PC-3 (cell line): ENCODE measurements at regions of chr1 and their contacts with region 1.

Region 1: GRCh38 chr1:31335007-31335406 is 37.9 kb downstream of the FABP3 start:
- DNase-seq: peak; percentile 71
- ATAC-seq: peak; percentile 88
- H3K4me3 ChIP-seq: no peak overlapping the region
- H3K27ac ChIP-seq: no peak overlapping the region
- H3K4me1 ChIP-seq: no peaks in the 10 kb centered on the region
- H3K27me3 ChIP-seq: no peaks in the 10 kb centered on the region
- CTCF ChIP-seq: peak; percentile 72

Region 2: GRCh38 chr1:31264790-31265386 is 70.1 kb before region 1 on chr1:
- CTCF ChIA-PET with region 1: no interaction called
- POLR2A ChIA-PET with region 1: no interaction called
- intact Hi-C with region 1: loop called (anchors 10 kb)
- DNase-seq: no peak
- ATAC-seq: no peak
- H3K4me3 ChIP-seq: no peak overlapping the region
- H3K27ac ChIP-seq: no peak overlapping the region
- H3K4me1 ChIP-seq: peaks cover 13% of the 10 kb centered on the region; the same call in 1 of the 2 replicates
- H3K27me3 ChIP-seq: no peaks in the 10 kb centered on the region
- CTCF ChIP-seq: no peak

Region 3: GRCh38 chr1:31296486-31297276 is 38.3 kb before region 1 on chr1 and contains the starts of genes SNRNP40 and ZCCHC17:
- CTCF ChIA-PET with region 1: no interaction called
- POLR2A ChIA-PET with region 1: interaction called, 3 read pairs
- intact Hi-C with region 1: loop called (anchors 2 kb)
- DNase-seq: peak; percentile 99
- ATAC-seq: peak; percentile 94
- H3K4me3 ChIP-seq: peak within 1 kb of the TSS; percentile 81
- H3K27ac ChIP-seq: peak within 1 kb of the TSS; percentile 37
- H3K4me1 ChIP-seq: peaks cover 32% of the 10 kb centered on the region
- H3K27me3 ChIP-seq: no peaks in the 10 kb centered on the region
- CTCF ChIP-seq: no peak; the same call in 1 of the 2 replicates
- total RNA-seq, gene SNRNP40: 230 and 288 TPM in 2 replicates
- total RNA-seq, gene ZCCHC17: 30.2 and 34.7 TPM in 2 replicates

Region 4: GRCh38 chr1:31955917-31956736 is 621.1 kb after region 1 on chr1:
- CTCF ChIA-PET with region 1: no interaction called
- POLR2A ChIA-PET with region 1: no interaction called
- intact Hi-C with region 1: no loop called
- DNase-seq: peak; percentile 98
- ATAC-seq: peak; percentile 90
- H3K4me3 ChIP-seq: no peak overlapping the region
- H3K27ac ChIP-seq: peak overlapping the region; percentile 99
- H3K4me1 ChIP-seq: peaks cover 25% of the 10 kb centered on the region
- H3K27me3 ChIP-seq: no peaks in the 10 kb centered on the region
- CTCF ChIP-seq: peak; percentile 48